Ovary (tissue), 10 donors: ENCODE measurements at regions of chr10 and their contacts with region 1.

Region 1: DNA sequence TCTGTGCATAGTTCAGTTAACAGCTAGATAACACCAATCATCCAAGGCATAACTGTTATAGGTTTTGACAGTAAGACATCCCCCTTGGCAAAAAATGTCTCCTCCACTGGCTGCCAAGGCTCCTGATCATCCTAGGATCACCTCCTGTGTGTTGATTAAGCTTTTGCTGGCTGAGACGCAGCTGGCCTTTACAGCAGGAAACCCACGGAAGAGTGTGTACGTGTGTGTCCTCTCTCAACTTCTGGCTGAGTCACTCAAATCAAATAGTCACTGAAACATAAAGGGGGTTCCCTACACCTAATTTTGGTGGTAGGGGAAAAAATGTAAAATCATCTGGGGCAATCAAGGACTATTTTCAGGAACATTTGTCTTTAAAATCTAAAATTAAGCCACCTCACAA is 208.8 kb downstream of the CTNNA3 start:
- DNase-seq: no peak
- H3K4me3 ChIP-seq: no peak overlapping the region
- H3K27ac ChIP-seq: no peak overlapping the region
- H3K4me1 ChIP-seq: no peaks in the 10 kb centered on the region
- H3K27me3 ChIP-seq: no peaks in the 10 kb centered on the region
- CTCF ChIP-seq: no peak
- EP300 ChIP-seq: no peak
- POLR2A ChIP-seq: no peak

Region 2: DNA sequence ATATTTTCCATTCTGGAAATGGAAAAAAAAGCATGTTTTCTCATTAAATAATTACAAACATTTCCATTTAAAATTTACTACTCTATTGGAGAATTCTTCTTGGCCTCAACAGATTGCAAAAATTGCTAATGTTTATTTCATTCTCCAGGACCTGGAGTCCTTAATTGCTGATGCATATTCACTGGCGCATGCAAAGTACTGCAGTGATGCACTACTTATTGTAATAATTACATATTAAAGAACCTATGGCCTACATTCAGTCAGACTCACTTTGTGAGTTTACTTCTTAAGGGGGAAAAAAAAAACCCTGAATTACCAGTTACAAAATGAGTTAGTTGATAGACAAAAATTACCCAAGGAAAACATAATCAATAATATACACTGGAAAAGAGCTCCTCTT is 952.3 kb before region 1 on chr10:
- intact Hi-C with region 1: loop called in 1 of 4 experiments (anchors 5 kb)
- DNase-seq: no peak
- H3K4me3 ChIP-seq: no peak overlapping the region
- H3K27ac ChIP-seq: no peak overlapping the region
- H3K4me1 ChIP-seq: no peaks in the 10 kb centered on the region
- H3K27me3 ChIP-seq: no peaks in the 10 kb centered on the region
- CTCF ChIP-seq: no peak
- EP300 ChIP-seq: no peak
- POLR2A ChIP-seq: no peak

Region 3: GRCh38 chr10:68163735-68164134 is 676.5 kb after region 1 on chr10:
- intact Hi-C with region 1: no loop called
- DNase-seq: no peak
- H3K4me3 ChIP-seq: no peak overlapping the region
- H3K27ac ChIP-seq: no peak overlapping the region
- H3K4me1 ChIP-seq: no peaks in the 10 kb centered on the region
- H3K27me3 ChIP-seq: no peaks in the 10 kb centered on the region
- CTCF ChIP-seq: no peak
- EP300 ChIP-seq: no peak
- POLR2A ChIP-seq: no peak